ENCODE measurements at regions of chr2 and their contacts with region 1.

Region 1: DNA sequence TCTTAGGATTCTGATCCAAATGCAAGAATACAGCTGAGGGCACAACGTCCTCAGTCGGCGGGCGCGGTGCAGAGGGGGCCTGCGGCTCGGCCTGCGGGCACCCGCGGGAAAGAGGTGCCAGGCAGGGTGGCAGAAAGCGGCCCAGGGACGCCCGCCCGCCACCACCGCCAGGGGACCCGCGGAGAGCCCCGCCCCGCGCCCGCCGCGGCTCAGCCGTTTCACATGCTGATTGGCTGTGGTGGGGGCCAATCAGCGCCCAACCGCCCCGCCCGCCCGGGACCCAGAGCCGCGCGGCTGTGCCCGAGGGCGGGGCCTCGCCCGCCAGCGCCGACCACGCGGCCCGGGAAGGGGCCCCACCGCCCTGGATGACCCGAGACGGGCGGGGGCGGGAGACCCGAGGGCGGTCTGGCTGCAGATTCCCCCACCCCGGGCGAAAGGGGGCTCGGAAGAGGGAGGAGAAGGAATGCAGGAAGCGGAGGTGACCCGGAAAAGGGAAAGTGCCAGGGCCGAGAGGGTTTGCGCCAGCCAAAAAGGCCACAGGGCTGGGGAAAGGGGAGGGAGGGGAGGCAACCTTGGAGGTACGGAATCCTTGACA is 8.0 kb downstream of the IRS1 start:
- DNase-seq: peak; percentile 93
- ATAC-seq: peak; percentile 98
- H3K4me3 Mint-ChIP-seq: peak overlapping the region; percentile 93
- H3K27ac Mint-ChIP-seq: peak overlapping the region; percentile 99
- H3K4me1 Mint-ChIP-seq: peaks cover 34% of the 10 kb centered on the region
- H3K27me3 Mint-ChIP-seq: no peaks in the 10 kb centered on the region
- CTCF ChIP-seq: no peak

Region 2: GRCh38 chr2:224946895-224947294 is 1844.7 kb before region 1 on chr2:
- CTCF ChIA-PET with region 1: no interaction called
- POLR2A ChIA-PET with region 1: no interaction called
- intact Hi-C with region 1: loop called (anchors 5 kb)
- DNase-seq: no peak
- ATAC-seq: peak; percentile 65
- H3K4me3 Mint-ChIP-seq: peak overlapping the region; percentile 90
- H3K27ac Mint-ChIP-seq: peak overlapping the region; percentile 92
- H3K4me1 Mint-ChIP-seq: peaks cover 87% of the 10 kb centered on the region
- H3K27me3 Mint-ChIP-seq: no peaks in the 10 kb centered on the region
- CTCF ChIP-seq: no peak

Region 3: DNA sequence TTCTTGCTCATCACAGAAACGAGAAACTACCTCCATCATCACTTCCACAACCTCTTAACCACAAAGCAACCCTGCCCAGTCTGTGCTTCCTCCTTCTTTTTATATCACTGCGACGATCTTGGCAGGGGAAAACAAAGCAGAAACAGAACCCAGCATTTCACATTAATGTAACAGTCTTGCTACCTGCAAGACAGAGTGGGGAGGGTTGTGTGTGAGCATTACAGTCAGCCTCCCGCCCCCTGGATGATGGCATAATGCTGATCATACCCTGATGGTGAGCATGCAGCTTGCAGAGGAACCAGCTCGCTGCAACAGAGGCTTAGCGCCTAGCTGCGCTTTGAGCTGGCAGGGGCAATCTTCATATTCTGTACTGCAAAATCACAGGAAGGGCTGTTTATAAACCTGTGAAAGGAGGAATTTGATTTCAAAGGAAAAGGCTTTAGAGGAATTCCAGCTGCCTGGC is 368.1 kb before region 1 on chr2:
- CTCF ChIA-PET with region 1: no interaction called
- POLR2A ChIA-PET with region 1: no interaction called
- intact Hi-C with region 1: loop called (anchors 1 kb)
- DNase-seq: peak; percentile 28
- ATAC-seq: peak; percentile 85
- H3K4me3 Mint-ChIP-seq: peak overlapping the region; percentile 72
- H3K27ac Mint-ChIP-seq: peak overlapping the region; percentile 13
- H3K4me1 Mint-ChIP-seq: peaks cover 37% of the 10 kb centered on the region
- H3K27me3 Mint-ChIP-seq: no peaks in the 10 kb centered on the region
- CTCF ChIP-seq: no peak

Region 4: DNA sequence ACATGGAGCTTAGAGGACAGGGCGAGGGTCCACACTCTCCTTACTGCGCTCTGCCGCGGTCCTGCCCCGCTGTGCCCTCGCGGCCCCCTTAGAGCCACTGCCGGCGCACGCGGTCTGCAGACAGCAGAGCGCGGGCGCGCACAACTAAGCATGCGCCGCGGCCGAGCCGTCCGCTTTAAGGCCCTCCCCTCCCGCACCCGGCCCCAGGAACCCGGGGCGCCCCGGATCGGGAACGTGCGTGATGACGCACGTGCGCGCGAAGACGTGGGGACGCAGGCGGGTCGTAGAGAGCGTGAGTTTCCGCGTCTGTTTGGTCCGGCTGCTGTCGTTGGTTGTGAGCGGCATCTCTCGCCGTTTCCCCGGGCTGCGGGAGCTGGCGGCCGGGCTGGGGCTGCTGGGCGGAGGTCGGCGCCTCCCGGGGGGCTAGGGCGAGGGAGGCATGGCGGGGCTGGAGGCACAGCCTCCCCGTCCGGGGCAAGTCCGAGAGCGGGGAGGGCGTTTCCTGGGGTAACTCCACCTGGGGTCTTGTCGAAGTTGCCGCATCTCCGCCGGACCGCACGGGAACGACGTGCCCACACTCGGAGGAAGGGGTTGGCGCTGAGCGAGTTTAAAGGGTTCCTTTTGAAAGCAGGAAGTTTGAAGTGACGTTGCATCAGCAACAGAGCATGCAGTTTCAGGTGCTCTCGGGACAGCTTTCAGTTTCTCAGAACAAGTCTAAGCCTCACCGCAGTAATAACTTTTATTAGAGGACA is 44.4 kb after region 1 on chr2 and contains the start of gene RHBDD1:
- CTCF ChIA-PET with region 1: no interaction called
- POLR2A ChIA-PET with region 1: interaction called, 29 read pairs
- intact Hi-C with region 1: loop called (anchors 1 kb)
- DNase-seq: peak; percentile 93
- ATAC-seq: peak; percentile 86
- H3K4me3 Mint-ChIP-seq: peak within 1 kb of the TSS; percentile 90
- H3K27ac Mint-ChIP-seq: peak within 1 kb of the TSS; percentile 97
- H3K4me1 Mint-ChIP-seq: peaks cover 69% of the 10 kb centered on the region
- H3K27me3 Mint-ChIP-seq: no peaks in the 10 kb centered on the region
- CTCF ChIP-seq: no peak
- total RNA-seq, gene RHBDD1: 71.1 and 90.2 TPM in 2 replicates

Region 5: DNA sequence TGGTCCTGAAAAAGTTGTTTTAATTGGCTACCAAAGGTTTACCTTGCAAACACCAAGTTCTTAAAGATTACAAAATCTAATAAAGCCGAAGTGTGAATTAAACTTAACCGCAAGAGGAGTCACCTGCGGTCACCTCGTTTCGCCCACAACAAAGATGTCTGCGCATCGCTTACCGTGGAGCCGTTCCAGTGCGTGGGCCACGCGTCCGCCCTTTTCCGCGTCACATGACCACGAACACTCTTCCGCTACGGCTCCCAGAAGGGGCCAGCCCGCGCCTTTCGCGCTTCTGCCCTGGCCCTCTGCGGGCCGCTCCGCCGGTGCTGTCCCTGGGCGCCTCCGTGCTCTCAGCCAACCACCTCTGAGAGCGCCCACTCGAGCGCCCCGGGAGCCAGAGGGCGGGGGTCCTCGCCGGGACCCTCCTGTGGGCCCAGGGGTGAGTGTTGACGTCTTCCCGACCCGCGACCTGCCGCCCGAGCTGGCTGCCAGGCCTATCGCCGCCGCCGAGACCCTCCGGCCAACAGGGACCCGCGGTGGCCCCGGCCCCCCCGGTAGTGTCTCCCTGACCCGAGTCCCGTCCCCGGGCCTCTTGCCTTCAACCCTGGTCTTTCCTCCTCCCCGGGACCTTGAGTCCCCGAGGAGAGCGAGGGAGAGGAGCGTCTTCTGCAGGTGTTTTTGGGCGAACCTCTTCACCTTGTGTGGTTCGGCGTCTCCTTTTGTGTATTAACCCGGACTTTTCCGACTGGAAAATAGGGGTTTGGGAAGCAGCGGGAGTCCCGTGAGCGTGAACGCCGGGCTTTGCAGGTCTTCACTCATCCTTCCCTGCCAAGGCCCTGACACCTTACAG is 533.6 kb after region 1 on chr2 and contains the start of gene MFF:
- CTCF ChIA-PET with region 1: no interaction called
- POLR2A ChIA-PET with region 1: no interaction called
- intact Hi-C with region 1: loop called (anchors 1 kb)
- DNase-seq: peak; percentile 87
- ATAC-seq: peak; percentile 98
- H3K4me3 Mint-ChIP-seq: peak within 1 kb of the TSS; percentile 95
- H3K27ac Mint-ChIP-seq: peak within 1 kb of the TSS; percentile 91
- H3K4me1 Mint-ChIP-seq: peaks cover 33% of the 10 kb centered on the region
- H3K27me3 Mint-ChIP-seq: no peaks in the 10 kb centered on the region
- CTCF ChIP-seq: no peak
- total RNA-seq, gene MFF: 66.4 and 78.9 TPM in 2 replicates

Measured in activated B cell treated with CpG ODN at 0.5 μM for 24 hours (primary cell).